Activated CD4-positive, alpha-beta T cell treated with anti-CD3 and anti-CD28 coated beads for 36 hours (primary cell): ENCODE measurements at regions of chr12 and their contacts with region 1.

Region 1: GRCh38 chr12:113098446-113098896 is 37.1 kb downstream of the RASAL1 start:
- DNase-seq: peak; percentile 88
- ATAC-seq: peak; percentile 89
- H3K4me3 Mint-ChIP-seq: no peak overlapping the region
- H3K27ac Mint-ChIP-seq: peak overlapping the region; percentile 70
- H3K4me1 Mint-ChIP-seq: peaks cover 21% of the 10 kb centered on the region
- H3K27me3 Mint-ChIP-seq: no peaks in the 10 kb centered on the region

Region 2: GRCh38 chr12:112906712-112907414 is 191.6 kb before region 1 on chr12 and contains the start of gene OAS1:
- CTCF ChIA-PET with region 1: interaction called, 3 read pairs
- POLR2A ChIA-PET with region 1: no interaction called
- intact Hi-C with region 1: loop called in 1 of 2 experiments (anchors 5 kb)
- DNase-seq: peak; percentile 55
- ATAC-seq: peak; percentile 85
- H3K4me3 Mint-ChIP-seq: peak within 1 kb of the TSS; percentile 85
- H3K27ac Mint-ChIP-seq: peak within 1 kb of the TSS; percentile 95
- H3K4me1 Mint-ChIP-seq: peaks cover 56% of the 10 kb centered on the region
- H3K27me3 Mint-ChIP-seq: no peaks in the 10 kb centered on the region
- total RNA-seq, gene OAS1: 50.5 to 52.8 TPM

Region 3: DNA sequence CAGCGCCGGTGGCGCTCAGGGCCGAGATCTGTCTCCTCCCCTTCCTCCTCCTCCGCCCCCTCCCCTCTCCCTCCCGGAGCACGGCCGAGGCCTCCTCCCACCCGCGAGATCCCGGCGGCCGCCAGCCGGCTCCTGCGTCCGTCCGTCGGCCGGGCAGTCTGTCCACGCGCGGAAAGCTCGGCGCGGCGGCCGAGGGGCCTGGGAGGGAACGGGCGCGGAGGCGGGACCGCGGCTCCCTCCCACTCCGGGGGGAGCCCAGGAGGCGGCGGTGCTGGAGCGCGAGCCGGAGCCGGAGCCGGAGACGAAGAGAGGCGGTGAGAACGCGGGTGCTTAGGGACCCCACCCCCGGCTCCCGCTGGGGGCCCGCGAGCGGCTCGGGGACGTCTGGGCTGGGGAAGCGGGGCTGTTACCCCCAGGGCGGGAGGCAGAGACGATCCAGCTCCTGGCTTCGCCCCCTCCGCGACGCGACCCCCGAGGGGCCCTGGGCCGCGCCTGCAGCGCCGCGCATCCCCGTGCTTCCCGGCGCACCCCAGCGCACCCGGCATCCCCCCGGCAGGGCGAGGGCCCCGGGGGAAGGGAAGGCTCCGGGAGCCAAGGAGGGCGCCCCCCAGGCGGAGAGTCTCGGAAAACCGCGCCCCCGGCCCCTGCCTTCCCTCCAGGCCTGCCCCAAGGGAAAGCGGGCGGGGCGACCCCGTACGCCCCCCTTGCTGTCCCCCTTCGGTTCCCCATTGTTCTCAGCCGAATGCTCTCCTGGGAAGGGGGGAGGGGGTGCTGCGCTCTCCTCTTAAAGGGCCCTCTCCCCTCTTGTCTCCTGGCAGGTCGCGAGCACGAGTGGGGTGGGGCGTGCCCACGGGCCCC is 41.6 kb before region 1 on chr12 and contains the start of gene DTX1:
- CTCF ChIA-PET with region 1: interaction called, 3 read pairs
- POLR2A ChIA-PET with region 1: interaction called, 5 read pairs
- intact Hi-C with region 1: loop called in 1 of 2 experiments (anchors 2 kb)
- DNase-seq: peak; percentile 63
- ATAC-seq: peak; percentile 57
- H3K4me3 Mint-ChIP-seq: peak within 1 kb of the TSS; percentile 74
- H3K27ac Mint-ChIP-seq: peak within 1 kb of the TSS; percentile 74
- H3K4me1 Mint-ChIP-seq: peaks cover 35% of the 10 kb centered on the region
- H3K27me3 Mint-ChIP-seq: no peaks in the 10 kb centered on the region
- total RNA-seq, gene DTX1: 12.0 to 12.9 TPM

Region 4: DNA sequence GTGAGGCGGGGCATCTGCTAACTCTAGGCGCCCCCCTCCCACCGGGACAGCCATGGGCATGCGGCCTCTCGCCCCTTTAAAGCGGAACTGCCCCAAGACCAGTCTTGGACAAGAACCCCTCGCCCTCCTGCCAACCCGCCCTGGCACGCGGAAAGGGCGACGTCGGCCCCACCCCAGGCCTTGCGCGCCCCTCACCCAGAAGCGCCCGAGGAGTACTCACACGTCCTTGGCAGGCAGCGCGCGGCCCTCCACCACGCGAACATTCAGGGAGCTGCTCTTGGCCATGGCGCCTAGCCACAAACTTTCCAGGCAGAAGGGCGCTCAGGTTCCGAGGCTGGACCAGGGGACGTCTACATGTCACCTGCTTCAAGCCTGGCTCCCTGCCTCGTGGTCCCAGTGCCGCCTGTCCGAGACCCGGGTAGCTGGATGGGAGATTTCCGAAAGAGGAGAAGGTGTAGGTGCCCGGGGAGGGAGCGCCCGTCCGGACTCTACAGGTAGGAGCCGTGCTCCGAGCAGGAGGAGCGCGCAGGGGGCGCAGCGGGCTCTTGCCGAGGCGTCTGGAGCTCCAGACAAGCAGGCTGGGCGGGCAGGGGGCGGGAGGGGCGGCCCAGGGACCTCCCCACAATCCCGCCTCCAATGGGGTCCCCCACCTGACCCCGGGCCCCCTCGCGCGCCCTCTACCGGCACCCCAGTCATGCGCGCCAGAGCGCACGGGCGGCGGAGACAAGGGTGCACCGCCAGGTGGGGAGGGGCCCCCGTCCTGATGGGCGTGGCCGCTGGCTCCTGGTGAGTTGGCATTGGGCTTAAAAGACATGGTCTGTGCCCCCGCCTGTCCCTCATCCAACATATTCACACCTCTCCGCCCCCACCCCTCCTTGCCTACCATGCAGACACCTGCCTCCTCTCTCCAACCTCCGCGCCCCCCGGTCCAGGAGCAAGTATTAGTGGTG is 37.0 kb after region 1 on chr12 and contains the start of gene RASAL1:
- CTCF ChIA-PET with region 1: interaction called, 4 read pairs
- POLR2A ChIA-PET with region 1: no interaction called
- intact Hi-C with region 1: loop called in 1 of 2 experiments (anchors 1 kb)
- DNase-seq: peak; percentile 96
- ATAC-seq: peak; percentile 92
- H3K4me3 Mint-ChIP-seq: peak within 1 kb of the TSS; percentile 73
- H3K27ac Mint-ChIP-seq: peak within 1 kb of the TSS; percentile 92
- H3K4me1 Mint-ChIP-seq: peaks cover 16% of the 10 kb centered on the region
- H3K27me3 Mint-ChIP-seq: no peaks in the 10 kb centered on the region
- total RNA-seq, gene RASAL1: 9.0 to 10.6 TPM

Region 5: DNA sequence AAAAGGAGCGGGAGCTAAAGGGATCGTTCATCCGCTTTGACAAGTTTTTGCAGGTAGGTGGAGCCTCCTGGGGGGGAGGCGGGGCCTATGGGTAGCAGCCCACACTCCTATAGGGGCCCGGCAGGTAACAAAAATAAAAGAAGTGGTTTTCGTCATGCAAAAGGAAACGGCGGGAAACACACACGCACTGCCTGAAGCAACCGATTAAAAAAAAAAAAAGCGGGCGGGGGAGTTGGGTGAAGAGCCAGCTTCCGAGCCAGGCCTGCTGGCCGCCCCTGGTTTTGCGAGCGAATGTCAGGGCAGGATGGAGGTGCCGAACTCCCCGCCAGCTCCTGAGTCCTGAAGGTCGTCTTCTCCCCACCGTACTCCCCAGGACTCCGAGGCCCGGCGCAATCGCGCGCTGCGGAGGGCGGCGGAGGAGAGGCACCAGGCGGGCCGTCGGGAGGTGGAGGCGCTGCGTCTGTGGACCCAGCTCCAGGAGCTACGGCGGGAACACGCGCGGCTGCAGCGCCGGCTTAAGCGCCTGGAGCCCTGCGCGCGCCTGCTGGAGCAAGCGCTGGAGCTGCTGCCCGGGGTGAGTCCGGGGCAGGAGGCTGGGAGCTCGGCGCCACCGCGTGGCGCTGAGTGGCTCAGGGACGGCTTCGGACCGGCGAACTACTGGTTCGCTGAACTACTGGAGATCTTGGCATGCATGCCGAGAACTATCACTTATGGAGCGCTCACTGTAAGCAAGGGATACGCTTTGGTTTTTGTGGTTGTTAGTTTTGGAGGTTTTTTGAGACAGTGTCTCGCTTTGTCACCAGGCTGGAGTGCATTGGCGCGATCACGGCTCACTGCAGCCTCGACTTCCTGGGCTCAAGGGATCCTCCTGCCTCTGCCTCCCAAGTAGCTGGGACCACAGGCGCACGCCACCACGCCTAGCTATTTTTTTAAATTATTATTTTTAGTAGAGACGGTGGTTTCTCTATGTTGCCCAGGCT is 54.7 kb after region 1 on chr12:
- CTCF ChIA-PET with region 1: interaction called, 6 read pairs
- POLR2A ChIA-PET with region 1: interaction called, 3 read pairs
- intact Hi-C with region 1: loop called (anchors 1 to 5 kb)
- DNase-seq: peak; percentile 82
- ATAC-seq: peak; percentile 78
- H3K4me3 Mint-ChIP-seq: peak overlapping the region; percentile 69
- H3K27ac Mint-ChIP-seq: peak overlapping the region; percentile 47
- H3K4me1 Mint-ChIP-seq: peaks cover 17% of the 10 kb centered on the region
- H3K27me3 Mint-ChIP-seq: peaks cover 11% of the 10 kb centered on the region

Region 6: GRCh38 chr12:113174461-113175384 is 76.3 kb after region 1 on chr12:
- CTCF ChIA-PET with region 1: interaction called, 9 read pairs
- POLR2A ChIA-PET with region 1: no interaction called
- intact Hi-C with region 1: loop called in 1 of 2 experiments (anchors 2 kb)
- DNase-seq: peak; percentile 88
- ATAC-seq: peak; percentile 75
- H3K4me3 Mint-ChIP-seq: no peak overlapping the region
- H3K27ac Mint-ChIP-seq: no peak overlapping the region
- H3K4me1 Mint-ChIP-seq: peaks cover 2% of the 10 kb centered on the region
- H3K27me3 Mint-ChIP-seq: no peaks in the 10 kb centered on the region